ENCODE measurements at regions of chr6 and their contacts with region 1.

Region 1: GRCh38 chr6:144343701-144344428 is 58.7 kb downstream of the UTRN start:
- DNase-seq: peak; percentile 72
- H3K4me3 ChIP-seq: peak overlapping the region; percentile 63
- H3K27ac ChIP-seq: peak overlapping the region; percentile 57
- H3K4me1 ChIP-seq: peaks cover 42% of the 10 kb centered on the region
- CTCF ChIP-seq: no peak

Region 2: GRCh38 chr6:143859888-143860660 is 483.8 kb before region 1 on chr6:
- CTCF ChIA-PET with region 1: no interaction called
- POLR2A ChIA-PET with region 1: no interaction called
- intact Hi-C with region 1: no loop called
- DNase-seq: no peak
- H3K4me3 ChIP-seq: no peak overlapping the region
- H3K27ac ChIP-seq: no peak overlapping the region
- H3K4me1 ChIP-seq: no peaks in the 10 kb centered on the region
- CTCF ChIP-seq: no peak

Region 3: GRCh38 chr6:144095331-144096002 is 248.4 kb before region 1 on chr6 and contains the start of gene SF3B5:
- CTCF ChIA-PET with region 1: no interaction called
- POLR2A ChIA-PET with region 1: no interaction called
- intact Hi-C with region 1: loop called (anchors 5 kb)
- DNase-seq: peak; percentile 100
- H3K4me3 ChIP-seq: peak within 1 kb of the TSS; percentile 90
- H3K27ac ChIP-seq: peak within 1 kb of the TSS; percentile 30
- H3K4me1 ChIP-seq: peaks cover 22% of the 10 kb centered on the region
- CTCF ChIP-seq: no peak
- total RNA-seq, gene SF3B5: 132 and 187 TPM in 2 replicates

Region 4: DNA sequence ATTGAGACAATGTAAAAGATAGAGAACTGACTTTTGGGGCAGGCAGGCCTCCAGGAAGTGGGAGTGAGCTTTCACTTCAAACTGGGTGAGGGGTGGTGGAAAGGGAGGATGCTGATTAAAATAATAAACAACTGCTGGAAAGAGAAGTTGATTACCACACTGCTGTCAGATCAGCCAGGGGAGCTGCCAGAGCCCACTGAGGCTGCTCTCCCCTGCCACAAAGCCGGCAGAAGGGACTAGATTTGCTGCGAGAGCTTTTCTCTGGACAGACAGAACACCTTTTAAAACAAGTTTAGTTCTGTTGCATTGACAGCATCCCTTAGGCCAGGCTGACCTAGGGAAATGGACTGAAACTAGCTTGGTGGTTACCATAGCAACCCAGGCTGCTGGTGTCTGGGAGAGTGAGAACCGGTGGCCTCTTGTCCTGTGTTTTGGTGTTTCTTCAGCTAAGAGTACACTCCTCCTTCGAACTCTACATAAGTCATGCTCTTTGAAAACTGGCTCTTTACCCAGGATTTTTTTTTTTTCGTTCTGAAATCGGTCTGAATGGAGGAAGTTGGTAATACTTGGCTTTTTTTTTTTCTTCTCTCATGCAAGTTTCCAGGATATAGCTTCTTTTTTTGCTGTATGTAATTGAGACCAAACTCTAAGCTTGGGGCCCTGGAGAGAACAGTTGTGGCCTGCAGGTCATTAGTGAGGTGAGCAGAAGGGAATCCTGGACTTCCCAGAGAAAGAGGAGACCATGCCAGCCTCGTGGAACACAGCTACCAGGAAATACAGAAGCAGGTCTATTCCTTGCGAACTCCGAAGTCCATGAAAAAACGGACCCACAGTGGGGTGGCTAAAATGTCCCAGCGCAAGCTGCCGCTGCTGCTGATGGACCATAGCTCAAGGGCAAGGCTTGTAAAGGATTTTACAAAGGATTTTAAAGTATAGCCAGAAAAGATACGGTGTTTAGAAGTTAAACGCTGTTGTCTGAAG is 315.6 kb after region 1 on chr6:
- CTCF ChIA-PET with region 1: no interaction called
- POLR2A ChIA-PET with region 1: no interaction called
- intact Hi-C with region 1: no loop called
- DNase-seq: no peak
- H3K4me3 ChIP-seq: no peak overlapping the region
- H3K27ac ChIP-seq: no peak overlapping the region
- H3K4me1 ChIP-seq: no peaks in the 10 kb centered on the region
- CTCF ChIP-seq: no peak

Region 5: DNA sequence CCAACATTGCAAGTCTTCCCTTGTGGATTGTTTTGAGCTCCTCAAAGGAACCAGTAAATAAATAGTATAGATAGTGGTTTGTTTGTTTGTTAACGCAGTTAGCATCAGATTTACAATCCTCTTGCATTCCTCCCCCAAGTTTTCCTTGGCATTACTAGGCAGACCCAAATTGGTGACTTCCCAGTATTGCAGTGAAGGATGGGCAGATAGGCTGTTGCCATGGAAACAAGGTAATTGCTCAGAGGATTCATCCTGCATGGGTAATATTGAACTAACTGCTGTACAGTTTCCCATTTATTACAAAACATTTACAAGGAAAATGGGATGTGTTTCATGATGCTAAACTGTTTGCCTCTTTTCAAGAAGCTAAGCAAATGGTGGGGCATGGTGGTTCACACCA is 914.3 kb after region 1 on chr6:
- CTCF ChIA-PET with region 1: no interaction called
- POLR2A ChIA-PET with region 1: no interaction called
- intact Hi-C with region 1: no loop called
- DNase-seq: no peak
- H3K4me3 ChIP-seq: no peak overlapping the region
- H3K27ac ChIP-seq: no peak overlapping the region
- H3K4me1 ChIP-seq: no peaks in the 10 kb centered on the region
- CTCF ChIP-seq: no peak